ENCODE measurements at regions of chr22 and their contacts with region 1.

Region 1: DNA sequence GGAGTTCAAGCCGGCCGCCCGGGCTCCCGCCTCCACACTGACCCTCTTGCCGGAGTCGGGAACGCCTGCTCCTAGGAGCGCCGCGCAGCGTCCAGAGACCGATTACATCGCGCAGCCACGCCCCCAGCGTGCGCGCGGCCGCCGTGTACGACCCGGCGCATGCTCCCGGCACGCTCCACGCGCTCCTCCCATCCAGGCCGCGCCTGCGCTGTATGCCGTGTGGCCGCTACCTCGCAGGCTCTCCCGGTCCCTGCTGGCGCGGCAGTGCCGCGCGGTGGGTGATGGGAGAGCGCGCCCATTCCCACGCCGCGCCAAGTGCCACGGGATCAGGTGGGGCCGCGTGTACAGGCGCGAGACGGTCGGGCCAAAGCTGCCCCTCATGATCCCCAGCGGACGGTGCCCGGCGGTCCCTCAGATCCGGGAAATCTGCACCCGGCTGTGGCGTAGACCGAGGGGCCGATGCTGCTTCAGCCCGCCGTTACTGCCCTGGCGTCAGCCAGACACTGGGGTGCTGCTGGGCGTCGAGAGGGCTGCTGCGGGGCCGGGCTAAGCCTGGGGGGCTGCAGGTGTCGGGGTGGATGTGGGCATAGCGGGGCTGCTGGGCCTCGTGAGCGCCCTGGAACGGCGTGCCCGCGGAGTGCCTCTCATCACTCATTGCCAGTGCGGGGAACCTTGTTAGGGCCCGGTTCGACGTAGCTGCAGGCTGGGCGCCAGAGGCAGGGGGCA is at the starts of genes GNB1L and RTL10:
- DNase-seq: peak; percentile 96
- H3K4me3 Mint-ChIP-seq: peak within 1 kb of the TSS; percentile 90
- H3K27ac Mint-ChIP-seq: peak within 1 kb of the TSS; percentile 90
- H3K4me1 Mint-ChIP-seq: peaks cover 36% of the 10 kb centered on the region
- H3K27me3 Mint-ChIP-seq: no peaks in the 10 kb centered on the region
- total RNA-seq, gene GNB1L: 7.4 to 8.7 TPM
- total RNA-seq, gene RTL10: 13.3 to 13.5 TPM

Region 2: DNA sequence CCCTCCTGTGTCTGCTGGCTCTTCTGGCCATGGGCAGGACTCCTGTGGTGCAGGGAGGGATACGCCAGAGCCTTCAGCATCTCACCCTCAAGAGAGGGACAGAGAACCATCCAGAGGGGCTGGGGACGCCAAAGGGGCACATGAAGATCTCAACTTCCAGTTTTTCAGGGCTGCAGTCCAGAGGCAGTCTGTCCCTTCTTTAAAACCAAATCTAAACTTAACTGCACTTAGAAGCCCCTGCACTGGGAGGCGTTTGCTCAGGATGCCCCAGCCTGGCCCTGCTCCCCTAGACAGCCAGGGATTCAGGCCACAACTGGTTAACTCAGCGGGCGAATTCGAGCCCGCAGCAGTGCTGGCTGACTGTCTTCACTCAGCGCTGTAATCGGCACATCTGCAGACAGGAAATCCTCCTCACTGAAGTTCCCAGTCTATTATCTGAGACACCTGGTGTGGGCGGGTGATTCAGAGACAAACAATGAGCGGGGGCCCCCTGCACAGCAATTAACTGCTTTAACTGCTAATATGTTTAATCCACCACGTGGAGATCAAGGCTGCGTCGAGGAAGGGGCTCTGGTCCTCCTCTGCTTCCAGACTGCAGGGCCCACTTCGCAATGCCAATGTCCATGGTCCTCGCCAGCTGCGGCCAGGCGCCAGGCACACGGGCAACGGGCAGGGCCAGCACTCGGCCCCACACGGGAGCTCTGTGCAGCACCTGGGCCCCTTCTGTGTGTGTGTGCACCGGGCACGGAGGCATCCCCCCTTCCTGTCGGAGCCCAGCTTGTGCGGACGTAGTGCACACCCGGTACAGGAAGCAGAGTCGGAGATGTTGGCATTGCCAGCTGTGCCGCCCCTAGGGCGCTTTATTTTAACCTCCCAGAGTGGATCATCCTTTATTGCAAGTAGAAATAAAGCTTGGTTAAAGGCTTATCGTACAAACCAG is 36.6 kb after region 1 on chr22:
- CTCF ChIA-PET with region 1: interaction called, 3 read pairs
- POLR2A ChIA-PET with region 1: interaction called, 45 read pairs
- DNase-seq: peak; percentile 77
- H3K4me3 Mint-ChIP-seq: peak overlapping the region; percentile 50
- H3K27ac Mint-ChIP-seq: peak overlapping the region; percentile 85
- H3K4me1 Mint-ChIP-seq: peaks cover 36% of the 10 kb centered on the region
- H3K27me3 Mint-ChIP-seq: no peaks in the 10 kb centered on the region

Region 3: DNA sequence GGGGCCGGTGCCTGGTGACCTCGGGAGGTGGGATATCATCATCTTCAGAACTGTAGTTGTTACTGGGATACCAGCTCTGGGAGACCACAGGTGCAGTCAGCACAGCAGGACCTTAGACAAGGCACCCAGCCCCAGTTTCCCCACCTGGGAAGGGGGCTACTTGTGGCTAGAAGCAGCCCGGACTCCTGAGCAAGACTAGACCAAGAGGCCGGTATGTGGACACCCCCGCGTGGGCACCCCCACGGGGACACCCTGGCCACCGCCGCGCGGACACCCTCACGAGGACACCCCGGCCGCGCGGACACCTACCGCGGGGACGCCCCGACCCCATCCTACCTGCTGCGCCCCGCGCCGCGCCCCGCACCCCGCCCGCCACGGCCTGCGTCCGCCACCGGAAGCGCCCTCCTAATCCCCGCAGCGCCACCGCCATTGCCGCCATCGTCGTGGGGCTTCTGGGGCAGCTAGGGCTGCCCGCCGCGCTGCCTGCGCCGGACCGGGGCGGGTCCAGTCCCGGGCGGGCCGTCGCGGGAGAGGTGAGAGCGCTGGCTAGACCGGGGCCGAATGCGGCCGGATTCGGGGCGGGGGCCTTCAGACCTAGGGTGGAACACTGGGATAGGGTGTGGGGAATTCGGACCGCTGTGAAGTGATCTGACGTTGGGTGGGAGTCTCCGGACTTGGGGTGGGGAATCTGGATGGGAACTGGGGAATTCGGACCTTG is 86.6 kb after region 1 on chr22 and contains the starts of genes COMT and TXNRD2:
- CTCF ChIA-PET with region 1: no interaction called
- POLR2A ChIA-PET with region 1: interaction called, 11 read pairs
- DNase-seq: peak; percentile 80
- H3K4me3 Mint-ChIP-seq: peak within 1 kb of the TSS; percentile 91
- H3K27ac Mint-ChIP-seq: peak within 1 kb of the TSS; percentile 88
- H3K4me1 Mint-ChIP-seq: peaks cover 36% of the 10 kb centered on the region
- H3K27me3 Mint-ChIP-seq: no peaks in the 10 kb centered on the region
- total RNA-seq, gene COMT: 78.7 to 79.3 TPM
- total RNA-seq, gene TXNRD2: 18.9 to 19.1 TPM

Region 4: GRCh38 chr22:19995626-19996335 is 140.8 kb after region 1 on chr22:
- CTCF ChIA-PET with region 1: no interaction called
- POLR2A ChIA-PET with region 1: no interaction called
- DNase-seq: no peak
- H3K4me3 Mint-ChIP-seq: no peak overlapping the region
- H3K27ac Mint-ChIP-seq: no peak overlapping the region
- H3K4me1 Mint-ChIP-seq: no peaks in the 10 kb centered on the region
- H3K27me3 Mint-ChIP-seq: no peaks in the 10 kb centered on the region

Measured in activated CD4-positive, alpha-beta memory T cell treated with anti-CD3 and anti-CD28 coated beads, Interleukin-2, amount 10 ng/mL, durations not matched to agents 7 days and 5 days (primary cell).